HEK293 (cell line): ENCODE measurements at regions of chr7 and their contacts with region 1.

Region 1: DNA sequence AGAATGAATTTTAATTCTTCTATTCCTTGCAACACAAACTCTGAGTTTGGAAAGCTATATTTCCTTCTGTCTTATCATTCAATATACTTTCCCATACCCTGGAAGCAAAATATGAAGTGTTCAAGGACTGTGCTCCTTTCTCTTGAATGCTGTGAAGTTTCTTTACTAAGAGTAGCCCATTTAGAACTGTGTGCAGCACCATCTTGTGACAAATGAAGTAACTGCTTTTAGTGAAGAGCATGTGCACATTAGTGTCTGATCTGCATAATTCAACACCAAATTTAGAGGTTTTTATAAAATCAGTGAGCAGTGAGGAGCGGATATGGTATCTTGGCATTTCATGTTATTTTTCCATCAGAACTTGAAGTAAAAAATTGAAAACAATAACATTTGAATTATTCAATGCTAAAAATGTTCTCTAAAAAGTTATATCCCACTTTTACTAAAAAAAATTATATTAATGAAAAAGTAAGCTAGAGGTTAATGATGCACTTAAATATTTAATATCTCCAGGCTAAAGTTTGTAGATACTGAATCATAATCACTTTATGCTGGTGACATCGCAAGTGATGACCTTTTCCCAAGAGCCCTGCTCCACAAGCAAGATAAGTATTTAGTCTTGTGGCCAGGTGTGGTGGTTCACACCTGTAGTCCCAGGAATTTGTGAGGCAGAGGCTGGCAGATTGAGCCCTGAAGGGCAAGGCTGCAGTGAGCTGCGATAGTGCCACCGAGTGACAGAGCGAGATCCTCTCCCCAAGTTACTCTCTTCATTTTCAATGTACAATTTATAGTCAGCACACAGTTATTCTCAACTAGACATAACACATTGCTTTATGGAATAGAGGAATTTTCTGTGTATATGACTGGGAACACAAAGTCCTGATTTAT is 108.8 kb upstream of the PCLO start:
- H3K4me3 ChIP-seq: no peak overlapping the region
- H3K27ac ChIP-seq: no peak overlapping the region
- H3K4me1 ChIP-seq: peaks cover 12% of the 10 kb centered on the region; the same call in 1 of the 2 replicates
- CTCF ChIP-seq: no peak; the same call in 1 of the 2 replicates

Region 2: GRCh38 chr7:82740246-82740848 is 531.1 kb before region 1 on chr7:
- CTCF ChIA-PET with region 1: interaction called, 14 read pairs
- POLR2A ChIA-PET with region 1: no interaction called
- H3K4me3 ChIP-seq: no peak overlapping the region
- H3K27ac ChIP-seq: no peak overlapping the region
- H3K4me1 ChIP-seq: no peaks in the 10 kb centered on the region
- CTCF ChIP-seq: no peak

Region 3: GRCh38 chr7:82810558-82811259 is 460.7 kb before region 1 on chr7:
- CTCF ChIA-PET with region 1: interaction called, 12 read pairs
- POLR2A ChIA-PET with region 1: no interaction called
- H3K4me3 ChIP-seq: no peak overlapping the region
- H3K27ac ChIP-seq: no peak overlapping the region
- H3K4me1 ChIP-seq: no peaks in the 10 kb centered on the region
- CTCF ChIP-seq: peak; percentile 28; the same call in 1 of the 2 replicates

Region 4: DNA sequence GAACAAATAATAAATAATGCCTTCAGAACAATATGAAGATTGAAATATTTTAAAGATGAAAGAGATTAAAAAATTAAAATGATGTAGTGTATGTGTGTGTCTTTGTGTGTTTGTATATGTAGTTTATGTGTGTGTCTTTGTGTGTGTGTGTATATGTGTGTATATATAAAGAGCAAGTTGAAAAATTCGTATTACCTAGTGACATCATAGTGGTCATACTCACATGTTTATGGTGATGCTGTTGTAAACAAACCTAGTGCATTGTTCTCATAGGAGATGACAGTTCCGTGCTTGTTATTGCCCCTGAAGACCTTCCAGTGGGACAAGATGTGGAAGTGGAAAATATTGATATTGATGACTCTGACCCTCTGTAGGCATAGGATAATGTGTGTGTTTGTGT is 11.7 kb after region 1 on chr7:
- CTCF ChIA-PET with region 1: interaction called, 10 read pairs
- POLR2A ChIA-PET with region 1: no interaction called
- H3K4me3 ChIP-seq: no peak overlapping the region
- H3K27ac ChIP-seq: no peak overlapping the region
- H3K4me1 ChIP-seq: no peaks in the 10 kb centered on the region
- CTCF ChIP-seq: no peak